Activated naive CD4-positive, alpha-beta T cell treated with anti-CD3 and anti-CD28 coated beads for 36 hours (primary cell): ENCODE measurements at regions of chr4 and their contacts with region 1.

Region 1: GRCh38 chr4:128809477-128810330 is at the start of gene JADE1:
- DNase-seq: peak; percentile 95
- H3K4me3 Mint-ChIP-seq: peak within 1 kb of the TSS; percentile 99
- H3K27ac Mint-ChIP-seq: peak within 1 kb of the TSS; percentile 100
- H3K4me1 Mint-ChIP-seq: peaks cover 15% of the 10 kb centered on the region
- H3K27me3 Mint-ChIP-seq: no peaks in the 10 kb centered on the region
- total RNA-seq, gene JADE1: 35.8 to 38.2 TPM

Region 2: GRCh38 chr4:127880764-127881562 is 928.7 kb before region 1 on chr4 and contains the start of gene PLK4:
- CTCF ChIA-PET with region 1: no interaction called
- intact Hi-C with region 1: loop called (anchors 2 kb)
- DNase-seq: peak; percentile 97
- H3K4me3 Mint-ChIP-seq: peak within 1 kb of the TSS; percentile 98
- H3K27ac Mint-ChIP-seq: peak within 1 kb of the TSS; percentile 98
- H3K4me1 Mint-ChIP-seq: peaks cover 18% of the 10 kb centered on the region
- H3K27me3 Mint-ChIP-seq: peaks cover 3% of the 10 kb centered on the region
- total RNA-seq, gene PLK4: 44.7 to 52.3 TPM

Region 3: DNA sequence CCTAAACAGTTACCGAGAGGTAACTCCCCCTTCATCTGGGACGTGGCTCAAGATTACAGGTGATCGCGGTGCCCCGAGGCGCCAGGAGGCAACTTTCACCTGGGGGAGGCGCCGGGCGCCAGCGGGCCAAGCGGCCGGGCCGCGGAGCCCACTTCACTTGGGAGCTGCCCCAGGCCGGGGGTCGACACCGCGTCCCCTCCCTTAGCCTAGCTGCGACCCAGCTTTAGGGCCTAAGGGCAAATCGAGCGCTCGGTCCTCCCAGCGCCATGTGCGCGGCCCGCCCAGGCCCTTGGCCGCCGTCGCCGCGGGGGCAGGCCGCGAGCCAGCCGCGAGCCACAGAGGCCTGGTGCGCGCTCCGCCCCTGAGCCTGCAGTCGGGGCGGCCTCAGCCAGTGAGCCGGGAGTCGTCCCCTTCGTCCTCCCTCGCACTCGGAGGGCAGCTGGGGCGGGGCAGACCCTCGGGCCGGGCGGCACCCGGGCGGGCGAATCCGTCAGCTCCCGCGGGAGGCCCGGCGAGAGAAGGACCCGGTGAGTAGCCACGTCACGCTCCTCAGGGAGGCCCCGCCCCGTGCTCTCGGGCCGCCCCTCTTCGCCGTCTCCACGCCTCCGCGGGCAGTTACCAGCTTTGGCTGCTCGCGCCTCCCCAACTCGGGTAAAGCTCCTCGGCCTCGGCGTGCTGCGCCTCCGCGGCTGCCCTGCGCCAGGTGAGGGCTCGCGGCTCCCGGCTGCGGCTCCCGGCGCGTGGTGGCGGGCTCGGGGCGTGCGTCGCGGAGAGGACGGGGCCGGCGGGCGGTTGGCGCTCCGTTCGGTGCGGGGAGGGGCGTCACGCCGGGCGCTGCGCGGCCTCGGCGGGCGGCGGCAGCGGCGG is 748.8 kb before region 1 on chr4 and contains the start of gene LARP1B:
- CTCF ChIA-PET with region 1: no interaction called
- intact Hi-C with region 1: loop called (anchors 2 kb)
- DNase-seq: peak; percentile 94
- H3K4me3 Mint-ChIP-seq: peak within 1 kb of the TSS; percentile 82
- H3K27ac Mint-ChIP-seq: peak within 1 kb of the TSS; percentile 81
- H3K4me1 Mint-ChIP-seq: peaks cover 16% of the 10 kb centered on the region
- H3K27me3 Mint-ChIP-seq: no peaks in the 10 kb centered on the region
- total RNA-seq, gene LARP1B: 17.6 to 18.9 TPM

Region 4: GRCh38 chr4:128454281-128455075 is 355.2 kb before region 1 on chr4:
- CTCF ChIA-PET with region 1: interaction called, 5 read pairs
- intact Hi-C with region 1: loop called (anchors 1 kb)
- DNase-seq: peak; percentile 84
- H3K4me3 Mint-ChIP-seq: peak overlapping the region; percentile 21
- H3K27ac Mint-ChIP-seq: no peak overlapping the region
- H3K4me1 Mint-ChIP-seq: peaks cover 8% of the 10 kb centered on the region
- H3K27me3 Mint-ChIP-seq: no peaks in the 10 kb centered on the region

Region 5: DNA sequence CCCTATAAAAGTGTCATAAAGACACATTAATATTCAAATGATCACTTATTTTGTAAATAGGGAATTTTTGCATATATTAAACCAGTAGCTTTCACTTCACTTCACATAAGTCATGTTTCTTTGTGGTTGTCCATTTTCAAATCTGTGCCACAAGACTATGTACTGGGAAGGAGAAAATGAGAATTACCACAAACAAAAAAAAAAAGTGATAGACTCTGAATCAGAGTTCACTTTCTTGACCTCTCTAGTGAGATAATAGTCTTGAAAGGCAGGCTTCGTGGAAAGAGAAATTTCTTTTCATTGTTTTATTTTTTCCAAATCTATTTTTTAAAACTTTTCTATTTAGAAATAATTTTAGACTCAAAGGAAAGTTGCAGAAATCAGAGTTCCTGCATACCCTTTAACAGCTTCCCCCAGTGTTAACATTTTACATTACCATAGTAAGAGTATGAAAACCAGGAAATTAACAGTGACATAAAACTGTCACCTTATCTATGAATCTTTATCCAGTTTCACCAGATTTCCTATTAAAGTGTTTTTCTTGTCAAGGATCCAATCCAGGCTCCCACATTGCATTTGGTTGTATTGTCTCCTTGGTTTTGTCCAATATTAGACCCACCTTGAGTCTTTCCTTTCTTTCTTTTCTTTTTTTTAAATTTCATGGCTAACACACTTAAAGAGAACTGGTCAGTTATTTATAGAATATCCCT is 306.7 kb before region 1 on chr4:
- CTCF ChIA-PET with region 1: no interaction called
- intact Hi-C with region 1: no loop called
- DNase-seq: no peak
- H3K4me3 Mint-ChIP-seq: no peak overlapping the region
- H3K27ac Mint-ChIP-seq: no peak overlapping the region
- H3K4me1 Mint-ChIP-seq: no peaks in the 10 kb centered on the region
- H3K27me3 Mint-ChIP-seq: no peaks in the 10 kb centered on the region

Region 6: GRCh38 chr4:128565565-128566186 is 244.0 kb before region 1 on chr4:
- CTCF ChIA-PET with region 1: no interaction called
- intact Hi-C with region 1: loop called (anchors 1 kb)
- DNase-seq: peak; percentile 50
- H3K4me3 Mint-ChIP-seq: no peak overlapping the region
- H3K27ac Mint-ChIP-seq: no peak overlapping the region
- H3K4me1 Mint-ChIP-seq: no peaks in the 10 kb centered on the region
- H3K27me3 Mint-ChIP-seq: peaks cover 7% of the 10 kb centered on the region

Region 7: GRCh38 chr4:128782076-128782715 is 27.5 kb before region 1 on chr4:
- CTCF ChIA-PET with region 1: interaction called, 4 read pairs
- intact Hi-C with region 1: loop called (anchors 1 kb)
- DNase-seq: peak; percentile 62
- H3K4me3 Mint-ChIP-seq: no peak overlapping the region
- H3K27ac Mint-ChIP-seq: no peak overlapping the region
- H3K4me1 Mint-ChIP-seq: no peaks in the 10 kb centered on the region
- H3K27me3 Mint-ChIP-seq: no peaks in the 10 kb centered on the region

Region 8: DNA sequence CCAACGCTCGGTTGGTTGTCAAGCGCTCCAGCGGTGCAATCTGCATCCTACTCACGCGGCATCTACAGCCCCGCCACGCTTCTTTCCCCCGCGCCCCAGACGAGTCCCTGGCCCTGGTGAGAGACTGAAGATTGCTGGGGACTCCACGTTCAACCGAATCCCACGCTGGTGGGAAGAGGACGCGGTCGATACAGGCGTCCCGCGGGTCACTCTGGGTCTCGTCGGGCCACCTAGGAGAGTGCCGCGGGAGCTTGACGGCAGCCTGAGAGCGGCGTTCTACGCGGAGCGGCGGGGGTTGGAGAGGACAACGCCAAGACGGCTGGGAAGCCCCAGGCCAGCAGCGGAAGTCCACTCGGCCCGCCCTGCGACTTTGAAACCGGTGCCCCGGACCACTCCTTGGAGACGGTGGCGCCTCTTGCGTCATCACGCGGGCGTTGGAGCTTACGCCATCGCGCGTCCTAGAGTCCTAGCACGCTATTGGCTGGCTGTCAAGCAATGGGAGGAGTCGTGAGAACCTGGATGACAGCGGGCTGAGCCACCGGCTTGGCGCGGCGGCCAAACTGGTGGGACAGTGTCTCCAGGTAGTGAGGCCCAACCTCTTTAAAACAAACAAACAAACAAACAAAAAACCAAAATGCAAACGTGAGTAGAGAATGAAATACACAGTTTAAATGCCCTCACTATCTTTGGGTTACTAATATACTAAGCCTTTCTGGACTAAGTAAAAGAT is 283.7 kb after region 1 on chr4 and contains the start of gene SCLT1:
- CTCF ChIA-PET with region 1: interaction called, 3 read pairs
- intact Hi-C with region 1: loop called (anchors 1 kb)
- DNase-seq: peak; percentile 98
- H3K4me3 Mint-ChIP-seq: peak within 1 kb of the TSS; percentile 55
- H3K27ac Mint-ChIP-seq: no peak within 1 kb of the TSS
- H3K4me1 Mint-ChIP-seq: peaks cover 31% of the 10 kb centered on the region
- H3K27me3 Mint-ChIP-seq: no peaks in the 10 kb centered on the region
- total RNA-seq, gene SCLT1: 20.3 to 21.1 TPM